GM13976 (cell line): ENCODE measurements at regions of chr2 and their contacts with region 1.

Region 1: DNA sequence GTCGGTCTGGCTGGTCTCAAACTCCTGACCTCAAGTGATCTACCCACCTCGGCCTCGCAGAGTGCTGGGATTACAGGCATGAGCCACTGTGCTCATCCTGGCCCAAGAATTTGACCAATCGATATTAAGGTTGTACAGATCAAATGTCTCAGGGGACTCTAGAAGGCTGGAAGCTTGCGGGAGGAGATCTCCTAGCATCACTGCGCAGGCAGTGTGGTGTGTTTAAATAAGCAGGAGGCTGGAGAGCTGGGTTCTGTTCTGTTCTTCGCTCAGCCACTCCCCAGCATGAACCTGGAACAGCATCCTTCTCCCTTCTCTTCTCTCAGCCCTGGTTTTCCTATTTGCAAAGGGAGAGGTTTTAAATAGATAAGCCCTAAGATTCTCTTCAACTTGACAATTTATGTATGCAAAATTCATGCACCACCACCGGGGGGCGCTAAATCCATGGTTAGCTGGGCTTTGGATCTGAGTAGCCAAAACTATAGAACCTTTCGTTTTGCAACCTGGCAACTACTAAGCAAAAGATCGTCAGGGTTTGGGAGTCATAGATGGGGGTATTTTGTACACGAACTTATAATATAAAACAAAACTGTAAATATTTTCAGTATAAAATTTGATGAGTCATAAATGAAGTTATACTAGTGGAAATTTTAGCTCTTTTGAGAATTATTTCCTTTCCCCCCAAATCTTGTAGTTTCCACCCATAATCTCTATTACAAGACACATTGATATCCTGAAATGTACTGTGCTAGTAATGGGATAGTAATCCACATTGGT is 60.6 kb downstream of the SLC16A14 start:
- DNase-seq: peak; percentile 71
- CTCF ChIP-seq: peak; percentile 74

Region 2: DNA sequence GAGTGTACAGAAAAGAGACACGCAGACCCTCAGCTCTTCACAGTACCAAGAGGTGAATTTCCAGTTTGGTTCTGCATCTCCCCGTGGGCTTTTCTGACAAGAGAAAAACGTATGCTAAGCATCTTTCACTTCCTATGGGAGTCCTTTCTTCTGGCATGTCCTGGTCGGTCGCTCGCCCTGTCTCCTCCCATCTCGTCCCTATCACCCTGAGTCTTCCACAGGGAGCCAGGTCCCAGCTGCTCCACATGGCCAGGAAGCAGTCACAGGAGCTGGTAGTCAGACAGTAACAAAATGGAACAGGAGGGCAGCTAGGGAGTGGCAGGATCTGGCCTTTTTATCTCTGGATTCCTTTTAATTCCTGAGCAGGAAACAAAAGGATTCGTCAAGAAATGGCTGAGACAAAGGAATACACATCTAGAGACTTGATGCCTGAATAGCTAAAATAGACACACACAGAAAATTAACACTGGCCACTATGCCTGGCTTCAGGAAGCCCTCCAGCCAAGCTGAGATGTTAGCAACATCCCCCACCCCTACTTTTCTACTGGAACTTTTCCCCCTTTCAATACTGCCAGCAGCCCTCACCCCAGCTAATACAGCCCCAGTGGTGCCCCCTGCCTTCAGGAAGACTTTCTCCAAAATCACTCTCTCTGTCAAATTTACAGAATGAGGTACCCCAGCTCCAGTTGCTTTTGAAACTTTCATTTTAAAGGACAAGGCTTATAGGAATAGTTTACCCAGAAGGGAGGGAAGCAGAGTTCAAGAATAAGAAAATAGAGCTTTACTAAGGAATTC is 429.9 kb before region 1 on chr2:
- in situ Hi-C with region 1: no loop called
- DNase-seq: no peak
- CTCF ChIP-seq: no peak

Region 3: GRCh38 chr2:229714736-229715541 is 293.2 kb before region 1 on chr2:
- in situ Hi-C with region 1: no loop called
- DNase-seq: peak; percentile 77
- CTCF ChIP-seq: no peak

Region 4: DNA sequence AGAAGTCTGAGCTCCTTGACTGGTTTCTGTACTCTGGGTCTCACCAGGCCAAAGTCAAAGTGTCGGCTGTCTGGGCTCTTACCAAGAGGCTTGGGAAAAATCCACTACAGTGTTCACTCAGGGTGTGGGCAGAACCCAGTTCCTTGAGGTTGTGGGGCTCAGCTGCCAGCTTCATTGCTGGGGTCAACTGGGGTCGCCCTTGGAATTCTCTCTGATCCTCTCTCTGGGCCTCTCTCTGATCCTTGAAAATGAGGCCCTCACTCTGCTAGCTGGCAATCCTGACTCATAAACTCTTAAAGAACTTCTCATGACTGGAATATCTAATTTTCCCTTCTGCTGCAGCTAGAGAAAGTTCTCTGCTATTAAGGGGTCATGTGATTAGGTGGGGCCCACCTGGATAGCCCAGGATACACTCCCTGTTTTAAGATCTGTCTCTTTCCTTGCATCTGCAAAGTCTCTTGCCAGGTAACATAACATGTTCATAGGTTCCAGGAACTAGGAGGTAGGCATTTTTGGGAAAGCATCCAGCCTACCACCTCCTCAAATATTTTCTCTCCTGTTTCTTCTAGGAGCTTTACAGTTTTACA is 145.4 kb after region 1 on chr2:
- in situ Hi-C with region 1: loop called (anchors 10 kb)
- DNase-seq: no peak
- CTCF ChIP-seq: no peak

Region 5: GRCh38 chr2:230614913-230615332 is 606.8 kb after region 1 on chr2:
- in situ Hi-C with region 1: loop called (anchors 10 kb)
- DNase-seq: peak; percentile 75
- CTCF ChIP-seq: no peak

Region 6: DNA sequence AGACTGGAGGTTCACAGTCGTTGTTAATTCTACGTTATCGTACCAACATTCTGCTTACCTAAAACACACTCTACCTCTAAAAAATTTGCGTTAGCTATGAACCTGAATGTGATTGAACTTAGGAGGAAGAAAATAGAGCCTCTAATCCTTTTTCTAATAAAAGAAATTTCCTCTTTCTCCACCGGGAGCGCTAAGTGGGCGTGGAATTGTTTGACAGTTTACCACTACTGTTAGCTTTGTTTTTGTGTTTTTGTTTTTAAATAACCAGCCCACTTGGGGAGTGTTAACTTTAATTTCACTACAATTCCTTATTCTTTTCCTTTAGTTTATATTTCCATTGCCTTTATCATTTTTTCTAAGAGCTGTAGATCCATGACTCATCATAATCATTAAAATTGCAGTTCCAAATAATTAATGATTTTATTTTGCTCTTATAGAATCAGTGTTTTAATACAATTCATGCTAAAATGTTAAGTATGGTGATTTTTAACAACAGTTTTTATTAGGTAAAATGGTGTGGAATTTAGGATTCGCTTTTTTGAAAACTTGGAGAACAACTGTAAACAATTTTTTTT is 801.6 kb after region 1 on chr2:
- in situ Hi-C with region 1: loop called (anchors 10 kb)
- DNase-seq: no peak
- CTCF ChIP-seq: no peak